ENCODE measurements at regions of chr14 and their contacts with region 1.

Region 1: GRCh38 chr14:105248368-105248756 is at the start of gene BTBD6:
- DNase-seq: peak; percentile 91
- H3K4me3 Mint-ChIP-seq: peak within 1 kb of the TSS; percentile 73
- H3K27ac Mint-ChIP-seq: peak within 1 kb of the TSS; percentile 65
- H3K4me1 Mint-ChIP-seq: peaks cover 34% of the 10 kb centered on the region
- H3K27me3 Mint-ChIP-seq: no peaks in the 10 kb centered on the region
- total RNA-seq, gene BTBD6: 44.2 to 45.7 TPM

Region 2: GRCh38 chr14:105300792-105301533 is 52.6 kb after region 1 on chr14 and contains the start of gene BRF1:
- CTCF ChIA-PET with region 1: interaction called, 8 read pairs
- POLR2A ChIA-PET with region 1: interaction called, 23 read pairs
- DNase-seq: peak; percentile 99
- H3K4me3 Mint-ChIP-seq: peak within 1 kb of the TSS; percentile 90
- H3K27ac Mint-ChIP-seq: peak within 1 kb of the TSS; percentile 89
- H3K4me1 Mint-ChIP-seq: peaks cover 44% of the 10 kb centered on the region
- H3K27me3 Mint-ChIP-seq: no peaks in the 10 kb centered on the region
- total RNA-seq, gene BRF1: 37.4 to 40.7 TPM

Measured in activated CD4-positive, alpha-beta memory T cell treated with anti-CD3 and anti-CD28 coated beads, Interleukin-2, amount 10 ng/mL, durations not matched to agents 7 days and 5 days (primary cell).